MCF 10A (cell line): ENCODE measurements at regions of chr1 and their contacts with region 1.

Region 1: DNA sequence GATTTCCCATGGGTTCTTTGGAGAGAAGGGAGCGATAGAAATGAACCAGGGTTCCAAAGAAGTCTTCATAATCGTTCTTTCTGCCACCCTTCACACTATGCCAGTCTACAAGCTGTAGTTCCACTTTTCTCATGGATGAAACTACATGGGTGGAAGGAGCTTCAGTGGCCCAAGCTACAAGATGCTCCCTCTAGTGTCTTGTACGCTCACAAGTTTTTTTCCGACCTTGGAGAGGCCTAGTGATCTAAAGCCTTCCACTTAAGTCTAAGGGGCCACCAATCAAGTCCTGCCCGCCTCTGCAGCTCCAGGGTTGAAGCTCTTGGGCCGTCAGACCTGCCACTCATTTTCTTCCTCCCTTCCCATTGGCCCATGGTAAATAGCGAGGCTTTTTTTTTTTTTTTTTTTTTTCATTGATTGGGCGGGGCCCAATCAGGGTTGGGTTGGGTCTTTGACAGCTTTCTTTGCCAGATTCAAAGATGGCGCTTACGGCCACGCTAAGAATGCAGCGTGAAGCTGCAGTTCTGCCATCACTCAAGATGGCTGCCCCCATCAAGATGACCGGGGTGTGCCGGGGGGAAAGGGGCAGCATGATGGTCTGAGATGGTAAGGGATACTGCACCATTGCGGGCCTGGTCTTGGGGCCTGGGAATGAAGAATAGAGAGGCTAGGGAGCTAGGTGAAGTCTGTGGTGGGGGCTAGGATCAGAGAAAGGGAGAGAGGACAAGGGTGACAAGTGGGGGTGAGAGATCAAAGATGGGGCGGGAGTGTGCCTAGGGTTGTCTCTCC is at the start of gene TOMM40L:
- DNase-seq: peak; percentile 100
- H3K4me3 Mint-ChIP-seq: peak within 1 kb of the TSS; percentile 90
- H3K27ac Mint-ChIP-seq: peak within 1 kb of the TSS; percentile 88
- H3K4me1 Mint-ChIP-seq: peaks cover 22% of the 10 kb centered on the region
- H3K27me3 Mint-ChIP-seq: no peaks in the 10 kb centered on the region
- CTCF ChIP-seq: peak; percentile 62
- total RNA-seq, gene TOMM40L: 10.0 and 12.3 TPM in 2 replicates

Region 2: DNA sequence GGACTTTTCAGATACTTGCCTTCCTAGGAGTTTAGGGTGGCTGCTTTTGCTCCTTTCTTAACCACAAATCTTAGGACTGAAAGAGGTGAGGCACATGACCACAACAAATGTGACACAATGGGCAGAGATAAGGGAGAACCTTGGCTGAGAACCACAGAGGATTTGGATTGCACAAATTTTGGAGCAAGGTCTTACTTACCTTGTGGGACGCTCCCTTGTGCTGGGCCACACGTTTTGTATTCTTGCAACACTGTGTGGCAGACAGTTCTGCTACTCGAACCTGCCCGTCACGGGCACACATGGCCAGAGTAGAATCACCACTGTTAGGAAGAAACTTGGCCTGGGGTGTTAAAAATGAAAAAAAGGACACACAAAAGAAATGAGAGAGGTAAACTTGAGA is 987.3 kb before region 1 on chr1:
- CTCF ChIA-PET with region 1: no interaction called
- POLR2A ChIA-PET with region 1: no interaction called
- intact Hi-C with region 1: no loop called
- DNase-seq: no peak
- H3K4me3 Mint-ChIP-seq: no peak overlapping the region
- H3K27ac Mint-ChIP-seq: peak overlapping the region; percentile 39
- H3K4me1 Mint-ChIP-seq: peaks cover 6% of the 10 kb centered on the region
- H3K27me3 Mint-ChIP-seq: no peaks in the 10 kb centered on the region
- CTCF ChIP-seq: no peak

Region 3: GRCh38 chr1:160446945-160447600 is 778.7 kb before region 1 on chr1:
- CTCF ChIA-PET with region 1: no interaction called
- POLR2A ChIA-PET with region 1: no interaction called
- intact Hi-C with region 1: no loop called
- DNase-seq: no peak
- H3K4me3 Mint-ChIP-seq: no peak overlapping the region
- H3K27ac Mint-ChIP-seq: no peak overlapping the region
- H3K4me1 Mint-ChIP-seq: no peaks in the 10 kb centered on the region
- H3K27me3 Mint-ChIP-seq: peaks cover 22% of the 10 kb centered on the region
- CTCF ChIP-seq: no peak

Region 4: DNA sequence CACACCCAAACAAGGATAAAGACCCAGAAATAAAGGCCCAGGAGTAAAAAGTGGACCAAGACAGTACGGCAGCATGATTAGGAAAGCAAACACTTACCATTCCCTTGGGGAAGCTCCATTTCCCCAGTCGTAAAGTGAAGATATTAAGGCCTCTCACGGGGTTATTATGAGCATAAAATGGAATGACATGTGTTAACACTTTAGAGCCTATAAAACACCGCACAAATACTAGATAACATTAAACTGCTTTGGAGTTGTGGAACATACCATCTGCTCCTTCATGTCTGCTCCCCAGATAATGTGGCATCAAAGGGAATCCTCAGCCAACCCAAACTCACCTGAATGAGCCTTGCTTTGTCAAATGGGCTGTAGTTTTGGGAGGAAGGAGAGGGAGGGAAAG is 262.2 kb before region 1 on chr1:
- CTCF ChIA-PET with region 1: no interaction called
- POLR2A ChIA-PET with region 1: no interaction called
- intact Hi-C with region 1: no loop called
- DNase-seq: no peak
- H3K4me3 Mint-ChIP-seq: no peak overlapping the region
- H3K27ac Mint-ChIP-seq: no peak overlapping the region
- H3K4me1 Mint-ChIP-seq: no peaks in the 10 kb centered on the region
- H3K27me3 Mint-ChIP-seq: no peaks in the 10 kb centered on the region
- CTCF ChIP-seq: no peak

Region 5: GRCh38 chr1:161098210-161099068 is 127.3 kb before region 1 on chr1 and contains the start of gene KLHDC9:
- CTCF ChIA-PET with region 1: no interaction called
- POLR2A ChIA-PET with region 1: no interaction called
- intact Hi-C with region 1: no loop called
- DNase-seq: no peak
- H3K4me3 Mint-ChIP-seq: no peak within 1 kb of the TSS
- H3K27ac Mint-ChIP-seq: peak within 1 kb of the TSS; percentile 61
- H3K4me1 Mint-ChIP-seq: peaks cover 37% of the 10 kb centered on the region
- H3K27me3 Mint-ChIP-seq: no peaks in the 10 kb centered on the region
- CTCF ChIP-seq: no peak
- total RNA-seq, gene KLHDC9: not detected in 2 replicates

Region 6: DNA sequence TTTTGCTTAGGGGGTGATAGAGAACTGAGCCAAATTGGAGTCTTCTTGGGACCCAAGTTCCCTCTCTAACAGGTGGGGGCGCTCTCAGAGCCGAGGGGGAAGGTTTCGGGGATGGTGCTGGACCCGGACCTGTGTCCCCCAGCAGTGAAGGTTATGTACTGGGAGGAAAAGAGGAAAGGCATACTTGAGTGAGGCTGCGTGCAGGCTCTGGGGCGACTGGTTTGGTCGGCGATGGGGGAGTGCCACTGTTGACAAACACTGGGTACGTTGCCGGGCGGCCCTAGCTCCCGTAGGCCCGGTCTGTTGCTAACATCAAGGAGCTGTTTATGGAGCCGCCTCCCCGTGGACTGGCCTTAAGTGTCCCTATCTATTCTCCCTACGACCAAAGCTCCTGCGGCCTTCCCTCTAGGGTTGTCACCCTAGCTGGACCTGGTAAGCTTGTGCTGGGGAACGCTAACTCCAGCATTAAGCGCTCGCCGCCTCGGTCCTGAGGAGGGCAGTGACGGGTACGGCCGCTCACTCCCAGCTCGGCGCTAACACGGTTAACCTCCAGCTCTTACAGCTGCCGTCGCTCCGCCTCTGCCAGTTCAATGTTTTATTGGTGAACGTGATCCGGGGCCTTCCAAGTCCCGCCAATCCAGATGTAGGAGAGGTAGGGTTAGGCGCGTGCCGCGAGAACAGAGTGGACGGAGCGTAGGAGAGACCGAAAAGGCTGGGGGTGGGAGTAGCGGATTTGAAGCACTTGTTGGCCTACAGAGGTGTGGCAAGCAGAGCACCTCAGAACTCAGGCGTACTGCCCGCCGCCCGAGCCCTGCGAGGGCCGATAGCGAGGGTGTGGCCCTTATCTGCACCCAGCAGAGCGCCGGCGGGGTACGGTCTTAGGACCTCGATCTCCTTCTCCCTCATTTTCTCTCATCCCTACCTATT is 59.7 kb before region 1 on chr1 and contains the start of gene PPOX:
- CTCF ChIA-PET with region 1: interaction called, 19 read pairs
- POLR2A ChIA-PET with region 1: interaction called, 12 read pairs
- intact Hi-C with region 1: no loop called
- DNase-seq: peak; percentile 100
- H3K4me3 Mint-ChIP-seq: peak within 1 kb of the TSS; percentile 98
- H3K27ac Mint-ChIP-seq: peak within 1 kb of the TSS; percentile 100
- H3K4me1 Mint-ChIP-seq: peaks cover 47% of the 10 kb centered on the region
- H3K27me3 Mint-ChIP-seq: no peaks in the 10 kb centered on the region
- CTCF ChIP-seq: peak; percentile 36
- total RNA-seq, gene PPOX: 30.3 and 32.4 TPM in 2 replicates

Region 7: DNA sequence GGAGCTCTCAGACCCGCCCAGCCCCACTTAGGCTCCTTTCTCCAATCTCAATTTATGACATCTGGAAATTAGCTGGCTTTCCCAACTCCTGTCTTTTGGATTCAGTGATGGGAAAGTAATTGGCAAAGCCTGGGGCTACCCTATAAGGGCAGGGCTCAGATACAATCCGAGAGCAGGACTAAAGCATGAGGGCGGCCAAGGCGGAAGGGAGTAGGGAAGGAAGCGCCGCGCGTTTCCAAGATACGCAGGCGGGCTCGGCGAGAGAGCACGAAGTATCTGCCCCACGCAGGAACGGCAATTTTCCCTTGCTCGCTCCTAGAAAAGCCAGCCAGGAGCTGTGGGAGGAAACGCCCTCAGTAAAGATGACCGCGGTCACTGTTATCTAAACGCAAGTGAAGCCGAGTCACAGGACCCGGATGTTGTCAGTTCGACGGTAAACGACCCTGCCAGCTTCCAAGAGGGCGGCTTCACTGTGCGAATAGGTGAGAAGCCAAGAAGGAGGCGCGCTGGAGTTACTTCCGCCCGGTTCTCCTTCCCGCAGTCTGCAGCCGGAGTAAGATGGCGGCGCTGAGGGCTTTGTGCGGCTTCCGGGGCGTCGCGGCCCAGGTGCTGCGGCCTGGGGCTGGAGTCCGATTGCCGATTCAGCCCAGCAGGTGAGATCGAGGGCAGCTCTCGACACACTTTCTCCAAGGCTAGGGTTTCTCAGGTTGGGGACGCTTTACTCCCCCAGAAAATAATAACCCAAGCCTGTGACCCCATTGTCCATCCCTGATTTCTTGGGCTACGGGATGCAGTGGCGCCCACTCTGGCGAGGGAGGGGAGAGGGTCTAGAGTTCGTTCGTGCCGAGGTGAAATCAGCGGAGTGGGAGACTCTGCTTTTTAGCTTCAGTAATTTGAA is 23.6 kb before region 1 on chr1 and contains the start of gene NDUFS2:
- CTCF ChIA-PET with region 1: interaction called, 444 read pairs
- POLR2A ChIA-PET with region 1: interaction called, 81 read pairs
- intact Hi-C with region 1: loop called (anchors 2 kb)
- DNase-seq: peak; percentile 100
- H3K4me3 Mint-ChIP-seq: peak within 1 kb of the TSS; percentile 85
- H3K27ac Mint-ChIP-seq: peak within 1 kb of the TSS; percentile 96
- H3K4me1 Mint-ChIP-seq: peaks cover 66% of the 10 kb centered on the region
- H3K27me3 Mint-ChIP-seq: no peaks in the 10 kb centered on the region
- CTCF ChIP-seq: no peak
- total RNA-seq, gene NDUFS2: 139 and 149 TPM in 2 replicates

Region 8: DNA sequence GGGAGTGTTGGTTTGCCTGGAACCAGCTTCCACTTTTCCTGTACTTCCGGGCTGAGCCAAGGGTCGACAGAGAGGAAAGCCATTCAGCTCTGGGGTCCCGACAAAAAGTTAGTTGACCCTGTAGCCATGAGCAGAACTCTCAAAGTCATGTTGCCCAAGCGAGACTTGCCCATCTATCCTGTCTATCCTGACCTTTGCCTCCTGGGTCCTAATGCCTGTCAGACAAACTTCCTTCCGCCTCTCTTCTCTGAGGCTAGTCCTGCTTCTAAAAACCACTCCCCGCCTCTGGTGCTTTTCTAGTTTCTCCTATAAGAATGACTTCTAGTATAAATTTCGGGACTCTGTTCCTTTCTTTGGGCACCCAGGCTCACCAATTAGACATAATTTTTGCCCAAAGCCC is 25.1 kb after region 1 on chr1:
- CTCF ChIA-PET with region 1: interaction called, 33 read pairs
- POLR2A ChIA-PET with region 1: interaction called, 3 read pairs
- intact Hi-C with region 1: no loop called
- DNase-seq: no peak
- H3K4me3 Mint-ChIP-seq: no peak overlapping the region
- H3K27ac Mint-ChIP-seq: no peak overlapping the region
- H3K4me1 Mint-ChIP-seq: no peaks in the 10 kb centered on the region
- H3K27me3 Mint-ChIP-seq: no peaks in the 10 kb centered on the region
- CTCF ChIP-seq: no peak

Region 9: DNA sequence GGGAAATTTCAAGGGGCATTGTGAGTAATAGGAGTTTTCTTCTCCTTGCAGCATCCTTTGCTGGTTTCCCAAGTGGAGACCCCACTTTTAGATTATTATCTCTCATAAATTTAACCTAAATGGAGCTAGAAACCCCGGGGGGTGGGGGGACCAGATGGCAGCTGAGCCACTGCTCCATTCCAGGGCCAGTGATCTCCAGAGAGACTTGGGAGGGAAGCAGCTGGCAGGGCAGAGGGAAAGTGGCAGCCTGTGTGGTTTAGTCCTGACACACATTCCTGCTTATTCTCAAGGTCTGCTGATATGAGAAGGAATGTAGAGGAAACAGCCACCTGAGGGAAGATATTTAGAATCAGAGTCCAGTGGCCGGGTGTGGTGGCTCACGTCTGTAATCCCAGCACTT is 49.1 kb after region 1 on chr1:
- CTCF ChIA-PET with region 1: interaction called, 30 read pairs
- POLR2A ChIA-PET with region 1: no interaction called
- intact Hi-C with region 1: no loop called
- DNase-seq: no peak
- H3K4me3 Mint-ChIP-seq: no peak overlapping the region
- H3K27ac Mint-ChIP-seq: no peak overlapping the region
- H3K4me1 Mint-ChIP-seq: no peaks in the 10 kb centered on the region
- H3K27me3 Mint-ChIP-seq: peaks cover 58% of the 10 kb centered on the region
- CTCF ChIP-seq: no peak

Region 10: GRCh38 chr1:161314201-161314981 is 88.7 kb after region 1 on chr1 and contains the start of gene SDHC:
- CTCF ChIA-PET with region 1: interaction called, 41 read pairs
- POLR2A ChIA-PET with region 1: interaction called, 61 read pairs
- intact Hi-C with region 1: loop called (anchors 1 kb)
- DNase-seq: peak; percentile 87
- H3K4me3 Mint-ChIP-seq: peak within 1 kb of the TSS; percentile 97
- H3K27ac Mint-ChIP-seq: peak within 1 kb of the TSS; percentile 100
- H3K4me1 Mint-ChIP-seq: peaks cover 13% of the 10 kb centered on the region
- H3K27me3 Mint-ChIP-seq: no peaks in the 10 kb centered on the region
- CTCF ChIP-seq: peak; percentile 35
- total RNA-seq, gene SDHC: 204 and 224 TPM in 2 replicates

Region 11: GRCh38 chr1:161382214-161383019 is 156.7 kb after region 1 on chr1:
- CTCF ChIA-PET with region 1: interaction called, 339 read pairs
- POLR2A ChIA-PET with region 1: interaction called, 33 read pairs
- intact Hi-C with region 1: loop called (anchors 1 kb)
- DNase-seq: peak; percentile 78
- H3K4me3 Mint-ChIP-seq: peak overlapping the region; percentile 11
- H3K27ac Mint-ChIP-seq: peak overlapping the region; percentile 37
- H3K4me1 Mint-ChIP-seq: peaks cover 22% of the 10 kb centered on the region
- H3K27me3 Mint-ChIP-seq: no peaks in the 10 kb centered on the region
- CTCF ChIP-seq: peak; percentile 68